ENCODE measurements at regions of chr12 and their contacts with region 1.

Region 1: DNA sequence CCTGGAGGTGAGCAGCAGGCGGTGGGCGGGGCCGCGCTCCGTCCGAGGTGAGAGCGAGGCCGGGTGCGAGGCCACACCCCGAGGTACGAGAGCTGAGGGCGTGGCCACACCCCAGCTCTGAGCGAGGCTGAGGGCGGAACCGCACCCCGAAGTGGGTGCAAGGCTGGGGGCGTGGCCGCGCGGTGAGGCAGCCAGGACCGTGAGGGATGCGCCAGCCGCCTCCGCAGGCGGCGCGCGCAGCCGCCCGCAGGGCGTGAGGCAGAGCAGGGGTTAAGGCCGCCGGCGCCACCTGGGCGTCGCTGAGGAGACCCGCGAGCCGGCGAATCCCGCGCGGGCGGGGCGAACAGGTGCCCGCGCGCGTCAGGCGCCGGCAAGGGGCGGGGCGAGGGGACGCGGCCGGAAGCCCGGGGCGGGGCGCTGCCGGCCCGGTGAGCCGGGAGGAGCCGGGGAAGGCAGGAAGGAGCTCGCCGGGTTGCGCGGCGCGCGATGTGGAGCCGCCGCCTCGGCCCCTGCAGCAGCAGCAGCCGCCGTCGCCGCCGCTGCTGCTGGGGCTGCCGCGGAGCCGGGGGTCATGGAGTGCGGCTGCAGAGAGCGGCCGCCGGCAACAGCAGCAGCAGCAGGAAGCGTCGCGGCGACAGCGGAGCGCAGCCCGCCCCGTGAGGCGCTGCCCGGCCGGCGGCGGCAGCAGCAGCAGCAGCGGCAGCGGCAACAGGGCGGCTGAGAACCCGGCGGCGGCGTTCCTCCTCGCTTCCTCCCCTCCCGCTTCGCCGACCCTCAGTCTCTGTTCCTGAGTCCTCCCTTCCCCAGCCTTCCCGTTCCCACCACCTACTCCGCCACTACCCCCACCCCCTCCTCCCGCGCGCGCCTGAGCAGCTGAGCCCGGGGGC is at the start of gene BICDL1:
- DNase-seq: peak; percentile 98
- ATAC-seq: peak; percentile 85
- H3K4me3 Mint-ChIP-seq: peak within 1 kb of the TSS; percentile 83
- H3K27ac Mint-ChIP-seq: peak within 1 kb of the TSS; percentile 80
- H3K4me1 Mint-ChIP-seq: peaks cover 30% of the 10 kb centered on the region
- H3K27me3 Mint-ChIP-seq: peaks cover 13% of the 10 kb centered on the region
- total RNA-seq, gene BICDL1: 59.8 to 62.9 TPM

Region 2: GRCh38 chr12:119659289-119659897 is 329.6 kb before region 1 on chr12:
- CTCF ChIA-PET with region 1: no interaction called
- DNase-seq: peak; percentile 64
- ATAC-seq: peak; percentile 66
- H3K4me3 Mint-ChIP-seq: no peak overlapping the region
- H3K27ac Mint-ChIP-seq: no peak overlapping the region
- H3K4me1 Mint-ChIP-seq: peaks cover 7% of the 10 kb centered on the region
- H3K27me3 Mint-ChIP-seq: peaks cover 4% of the 10 kb centered on the region

Region 3: DNA sequence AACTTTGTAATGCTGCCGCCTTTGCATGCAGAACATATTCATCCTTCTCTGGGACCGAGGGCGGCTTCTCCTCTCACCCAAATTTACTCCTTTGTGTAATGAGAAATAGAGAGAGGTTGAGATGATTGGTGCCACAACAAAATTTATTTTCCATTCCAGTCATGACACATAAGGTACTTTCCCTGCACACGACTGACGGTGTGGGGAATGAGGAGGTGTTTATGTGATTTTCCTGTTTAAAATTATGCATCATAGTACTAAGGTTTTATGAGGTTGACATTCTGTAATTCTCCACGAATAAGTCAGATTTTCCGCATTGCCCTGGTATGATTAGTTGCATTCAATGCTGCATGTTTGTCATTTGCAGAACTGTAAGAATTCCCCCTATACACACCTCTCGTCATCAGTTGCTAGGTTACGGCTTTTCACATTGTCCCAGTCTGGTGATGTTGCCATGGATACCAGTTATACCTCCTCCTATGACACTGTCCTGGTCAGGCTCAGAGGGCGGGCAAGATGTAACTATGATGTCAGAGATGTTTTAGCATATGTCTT is 23.1 kb after region 1 on chr12:
- CTCF ChIA-PET with region 1: interaction called, 36 read pairs
- DNase-seq: peak; percentile 90
- ATAC-seq: peak; percentile 79
- H3K4me3 Mint-ChIP-seq: peak overlapping the region; percentile 60
- H3K27ac Mint-ChIP-seq: peak overlapping the region; percentile 90
- H3K4me1 Mint-ChIP-seq: peaks cover 84% of the 10 kb centered on the region
- H3K27me3 Mint-ChIP-seq: no peaks in the 10 kb centered on the region

Region 4: DNA sequence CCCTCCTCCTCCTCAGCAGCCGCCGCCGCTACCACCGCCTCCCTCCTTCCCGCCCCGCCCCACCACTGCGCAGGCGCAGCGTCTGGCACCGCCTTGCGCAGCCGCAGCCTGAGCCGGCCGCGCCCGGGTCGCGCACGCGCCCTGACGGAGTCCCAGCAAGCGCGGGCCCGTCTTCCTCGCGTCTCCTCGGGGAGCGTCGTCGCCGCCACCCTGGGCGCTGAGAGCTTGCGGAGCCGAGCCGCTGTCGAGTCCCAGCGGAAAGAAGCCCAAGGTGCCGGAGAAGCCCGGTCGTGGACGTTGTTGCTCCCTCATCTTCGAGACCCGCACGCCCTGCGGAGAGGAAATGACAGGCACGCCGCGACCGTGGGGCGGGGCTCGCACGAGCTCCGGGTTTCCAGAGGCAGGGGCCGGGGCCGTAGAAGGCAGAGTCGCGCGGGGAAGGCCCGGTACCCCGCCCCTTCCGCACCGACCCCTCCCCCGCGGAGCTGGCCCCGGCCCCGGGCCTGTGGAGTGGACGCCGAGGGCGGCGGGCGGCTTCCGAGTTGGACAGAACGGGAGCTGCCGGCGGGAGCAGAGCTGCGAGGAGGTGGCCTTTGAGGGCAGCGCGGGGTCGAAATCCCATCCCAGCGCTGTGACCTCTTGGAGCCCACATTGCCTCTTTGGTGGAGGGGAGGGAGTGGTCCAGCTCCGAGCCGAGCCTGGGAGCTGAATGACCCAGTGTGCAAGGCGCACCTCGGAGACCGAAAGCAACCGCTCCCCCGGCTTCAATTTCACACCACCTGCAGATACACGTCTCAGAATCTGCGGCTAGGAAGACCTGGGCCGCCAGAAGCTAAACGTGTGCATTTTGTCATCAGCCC is 128.0 kb after region 1 on chr12:
- CTCF ChIA-PET with region 1: interaction called, 10 read pairs
- DNase-seq: peak; percentile 98
- ATAC-seq: peak; percentile 81
- H3K4me3 Mint-ChIP-seq: peak overlapping the region; percentile 81
- H3K27ac Mint-ChIP-seq: peak overlapping the region; percentile 83
- H3K4me1 Mint-ChIP-seq: peaks cover 74% of the 10 kb centered on the region
- H3K27me3 Mint-ChIP-seq: no peaks in the 10 kb centered on the region